ENCODE measurements at regions of chr12 and their contacts with region 1.

Region 1: DNA sequence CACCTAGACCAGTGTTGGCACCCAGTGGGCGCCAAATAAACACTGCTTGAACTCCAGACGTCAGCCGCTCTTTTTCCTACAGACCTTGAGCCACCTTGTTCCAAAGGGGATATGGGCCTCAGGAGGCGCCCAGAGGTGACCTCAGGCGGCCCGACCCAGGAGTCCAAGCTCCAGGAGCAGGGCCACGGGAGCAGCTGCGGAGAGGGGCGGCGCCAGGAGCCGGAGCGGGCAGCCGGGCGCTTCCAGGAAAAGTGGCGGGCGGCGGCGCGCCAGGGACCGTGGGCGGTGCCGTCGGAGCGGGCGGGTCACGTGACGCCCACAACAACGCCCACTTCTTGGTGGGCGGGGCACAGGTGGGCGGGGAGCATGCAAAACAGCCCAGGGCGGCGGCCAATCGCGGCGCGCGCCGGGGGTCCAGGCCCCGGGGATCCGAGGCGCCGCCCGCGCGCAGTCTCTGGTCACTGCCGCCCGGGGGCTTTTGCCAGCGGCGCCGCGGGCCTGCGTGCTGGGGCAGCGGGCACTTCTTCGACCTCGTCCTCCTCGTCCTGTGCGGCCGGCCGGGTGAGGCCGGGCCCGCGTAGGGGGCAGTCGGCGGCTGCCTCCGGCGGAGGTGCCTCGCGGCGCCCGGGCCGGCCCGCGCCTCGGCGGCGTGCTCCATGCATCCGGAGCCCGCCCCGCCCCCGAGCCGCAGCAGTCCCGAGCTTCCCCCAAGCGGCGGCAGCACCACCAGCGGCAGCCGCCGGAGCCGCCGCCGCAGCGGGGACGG is at the start of gene ORAI1:
- DNase-seq: peak; percentile 98
- H3K4me3 ChIP-seq: peak within 1 kb of the TSS; percentile 62 to 91 (median 80)
- H3K27ac ChIP-seq: peak within 1 kb of the TSS; percentile 84 to 98 (median 94)
- H3K4me1 ChIP-seq: peaks cover 33 to 60% (median 55%) of the 10 kb centered on the region in 4 donors
- H3K27me3 ChIP-seq: peaks cover 0 to 5% (median 0%) of the 10 kb centered on the region in 4 donors
- CTCF ChIP-seq: peak in 2 of 3 experiments; percentile 31 to 42
- EP300 ChIP-seq: no peak
- POLR2A ChIP-seq: peak; percentile 21
- total RNA-seq, gene ORAI1: 7.1 to 17.7 (median 13.5) TPM

Region 2: DNA sequence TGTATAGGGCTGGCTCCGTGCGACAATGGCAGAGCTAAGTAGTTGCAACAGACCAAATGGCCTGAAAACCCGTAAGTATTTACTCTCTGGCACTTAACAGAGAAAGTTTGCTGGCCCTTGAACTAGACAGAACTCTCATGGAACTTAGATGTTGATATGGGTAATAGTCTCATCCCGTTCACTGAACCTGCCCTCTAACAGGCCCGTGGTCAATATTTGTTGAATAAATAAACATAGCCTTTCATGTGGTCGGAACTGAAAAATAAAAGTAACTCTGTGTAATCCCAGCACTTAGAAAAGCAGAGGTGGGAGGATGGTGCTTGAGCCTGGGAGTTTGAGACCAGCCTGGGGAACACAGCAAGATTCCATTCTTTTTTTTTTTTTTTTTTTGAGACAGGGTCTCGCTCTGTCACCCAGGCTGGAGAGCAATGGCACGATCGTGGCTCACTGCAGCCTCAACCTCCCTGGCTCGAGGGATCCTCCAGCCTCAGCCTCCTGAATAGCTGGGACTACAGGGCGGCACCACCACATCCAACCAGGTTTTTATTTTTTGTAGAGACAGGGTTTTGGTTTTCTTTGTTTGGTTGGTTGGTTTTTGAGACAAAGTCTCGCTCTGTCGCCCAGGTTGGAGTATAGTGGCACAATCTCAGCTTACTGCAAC is 75.2 kb before region 1 on chr12:
- intact Hi-C with region 1: loop called (anchors 2 kb)
- DNase-seq: no peak
- H3K4me3 ChIP-seq: no peak overlapping the region
- H3K27ac ChIP-seq: no peak overlapping the region
- H3K4me1 ChIP-seq: peaks cover 0 to 6% (median 3%) of the 10 kb centered on the region in 4 donors
- H3K27me3 ChIP-seq: no peaks in the 10 kb centered on the region
- CTCF ChIP-seq: no peak
- EP300 ChIP-seq: no peak
- POLR2A ChIP-seq: no peak

Region 3: GRCh38 chr12:121673003-121673511 is 46.8 kb after region 1 on chr12:
- intact Hi-C with region 1: loop called (anchors 5 kb)
- DNase-seq: no peak
- H3K4me3 ChIP-seq: peak overlapping the region; percentile 46 to 61 (median 54)
- H3K27ac ChIP-seq: peak overlapping the region; percentile 4 to 54 (median 46)
- H3K4me1 ChIP-seq: peaks cover 10 to 19% (median 18%) of the 10 kb centered on the region in 4 donors
- H3K27me3 ChIP-seq: no peaks in the 10 kb centered on the region
- CTCF ChIP-seq: no peak
- EP300 ChIP-seq: no peak
- POLR2A ChIP-seq: no peak

Region 4: DNA sequence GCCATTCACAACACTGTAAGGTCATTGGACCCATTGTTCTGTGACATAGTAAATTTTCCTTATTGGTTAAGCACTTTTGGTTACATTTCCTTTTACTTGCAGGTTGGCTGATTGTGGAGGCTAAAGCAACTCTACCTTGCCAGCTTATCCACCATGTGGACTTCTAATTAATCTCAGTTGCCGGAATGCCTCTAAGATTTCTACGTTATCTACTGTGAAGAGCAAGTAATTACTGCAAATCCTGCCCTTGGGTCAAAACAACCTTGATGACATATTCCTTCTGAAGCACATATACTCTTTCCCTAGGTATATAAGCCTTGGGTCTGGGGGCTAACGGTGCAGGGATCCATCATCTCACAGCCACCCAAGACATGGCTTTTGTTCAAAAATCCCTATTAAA is 62.7 kb after region 1 on chr12:
- intact Hi-C with region 1: loop called (anchors 5 kb)
- DNase-seq: no peak
- H3K4me3 ChIP-seq: no peak overlapping the region
- H3K27ac ChIP-seq: no peak overlapping the region
- H3K4me1 ChIP-seq: peaks cover 6 to 18% (median 14%) of the 10 kb centered on the region in 4 donors
- H3K27me3 ChIP-seq: no peaks in the 10 kb centered on the region
- CTCF ChIP-seq: no peak
- EP300 ChIP-seq: no peak
- POLR2A ChIP-seq: no peak